Activated naive CD4-positive, alpha-beta T cell treated with anti-CD3 and anti-CD28 coated beads, Interleukin-2, amount 10 ng/mL, durations not matched to agents 7 days and 5 days (primary cell): ENCODE measurements at regions of chr7 and their contacts with region 1.

Region 1: DNA sequence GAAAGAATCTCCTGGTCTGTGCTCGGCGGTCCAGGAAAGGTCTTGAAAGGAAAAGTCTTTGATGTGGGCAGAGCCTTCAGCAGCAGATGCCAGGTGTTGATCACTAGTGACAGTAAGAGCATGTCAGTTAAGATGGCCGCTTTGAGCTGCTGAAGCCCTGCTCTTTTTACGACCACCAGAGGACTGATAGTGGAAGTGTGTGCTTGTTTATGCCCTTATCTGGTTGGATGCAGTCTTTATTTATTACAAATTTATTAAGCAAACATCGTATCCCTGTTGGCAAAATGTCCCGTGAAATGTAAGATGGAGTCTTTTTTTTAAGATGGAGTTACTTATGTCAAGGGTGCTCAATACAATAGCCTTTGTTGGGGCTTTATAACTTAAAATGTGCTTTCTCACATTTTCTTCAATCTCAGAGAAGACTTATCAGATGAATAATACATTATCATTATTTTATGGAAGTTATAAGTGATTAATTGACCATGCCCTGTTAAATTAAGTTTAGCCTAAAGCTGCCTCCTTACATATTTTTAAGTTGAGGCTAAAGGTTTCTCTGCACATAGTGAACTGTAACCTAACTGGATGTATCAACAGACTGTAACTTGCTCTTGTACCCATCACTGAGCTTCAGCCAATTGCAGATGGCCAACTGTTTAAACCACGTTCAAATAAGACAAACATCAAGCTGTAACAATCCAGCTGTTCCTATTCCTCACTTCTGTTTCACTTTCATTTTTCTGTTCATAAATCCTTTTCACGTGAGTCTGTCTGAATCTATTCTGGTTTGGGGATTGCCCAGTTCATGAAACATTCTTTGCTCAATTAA is 97.4 kb upstream of the PIK3CG start:
- DNase-seq: peak; percentile 28
- H3K4me3 Mint-ChIP-seq: peak overlapping the region; percentile 64
- H3K27ac Mint-ChIP-seq: peak overlapping the region; percentile 81
- H3K4me1 Mint-ChIP-seq: peaks cover 23% of the 10 kb centered on the region
- H3K27me3 Mint-ChIP-seq: no peaks in the 10 kb centered on the region

Region 2: DNA sequence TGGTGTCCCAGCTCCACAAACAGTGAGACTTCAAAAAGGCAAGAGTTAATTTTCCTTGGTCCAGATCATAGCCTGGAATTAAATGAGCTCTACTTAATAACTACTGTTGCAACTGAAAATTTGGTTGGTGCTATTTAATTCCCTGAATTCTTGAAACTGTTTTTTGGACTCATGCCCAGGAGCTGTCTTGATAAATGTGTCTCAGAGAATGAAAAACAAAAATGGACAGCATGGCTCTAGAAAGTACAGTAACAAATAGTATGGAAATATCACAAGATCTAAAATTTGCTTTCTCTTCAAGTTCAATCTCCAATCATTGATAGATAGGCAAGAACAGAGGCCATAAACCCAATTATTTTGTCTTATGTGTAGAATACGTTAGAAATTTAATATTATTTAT is 149.2 kb before region 1 on chr7:
- CTCF ChIA-PET with region 1: no interaction called
- DNase-seq: no peak
- H3K4me3 Mint-ChIP-seq: no peak overlapping the region
- H3K27ac Mint-ChIP-seq: no peak overlapping the region
- H3K4me1 Mint-ChIP-seq: no peaks in the 10 kb centered on the region
- H3K27me3 Mint-ChIP-seq: peaks cover 5% of the 10 kb centered on the region

Region 3: GRCh38 chr7:106659963-106660861 is 107.5 kb before region 1 on chr7:
- CTCF ChIA-PET with region 1: interaction called, 10 read pairs
- DNase-seq: peak; percentile 85
- H3K4me3 Mint-ChIP-seq: peak overlapping the region; percentile 85
- H3K27ac Mint-ChIP-seq: peak overlapping the region; percentile 91
- H3K4me1 Mint-ChIP-seq: peaks cover 37% of the 10 kb centered on the region
- H3K27me3 Mint-ChIP-seq: peaks cover 17% of the 10 kb centered on the region

Region 4: GRCh38 chr7:106671160-106671559 is 96.6 kb before region 1 on chr7:
- CTCF ChIA-PET with region 1: no interaction called
- DNase-seq: no peak
- H3K4me3 Mint-ChIP-seq: no peak overlapping the region
- H3K27ac Mint-ChIP-seq: no peak overlapping the region
- H3K4me1 Mint-ChIP-seq: no peaks in the 10 kb centered on the region
- H3K27me3 Mint-ChIP-seq: no peaks in the 10 kb centered on the region